ENCODE measurements at regions of chr1 and their contacts with region 1.

Region 1: DNA sequence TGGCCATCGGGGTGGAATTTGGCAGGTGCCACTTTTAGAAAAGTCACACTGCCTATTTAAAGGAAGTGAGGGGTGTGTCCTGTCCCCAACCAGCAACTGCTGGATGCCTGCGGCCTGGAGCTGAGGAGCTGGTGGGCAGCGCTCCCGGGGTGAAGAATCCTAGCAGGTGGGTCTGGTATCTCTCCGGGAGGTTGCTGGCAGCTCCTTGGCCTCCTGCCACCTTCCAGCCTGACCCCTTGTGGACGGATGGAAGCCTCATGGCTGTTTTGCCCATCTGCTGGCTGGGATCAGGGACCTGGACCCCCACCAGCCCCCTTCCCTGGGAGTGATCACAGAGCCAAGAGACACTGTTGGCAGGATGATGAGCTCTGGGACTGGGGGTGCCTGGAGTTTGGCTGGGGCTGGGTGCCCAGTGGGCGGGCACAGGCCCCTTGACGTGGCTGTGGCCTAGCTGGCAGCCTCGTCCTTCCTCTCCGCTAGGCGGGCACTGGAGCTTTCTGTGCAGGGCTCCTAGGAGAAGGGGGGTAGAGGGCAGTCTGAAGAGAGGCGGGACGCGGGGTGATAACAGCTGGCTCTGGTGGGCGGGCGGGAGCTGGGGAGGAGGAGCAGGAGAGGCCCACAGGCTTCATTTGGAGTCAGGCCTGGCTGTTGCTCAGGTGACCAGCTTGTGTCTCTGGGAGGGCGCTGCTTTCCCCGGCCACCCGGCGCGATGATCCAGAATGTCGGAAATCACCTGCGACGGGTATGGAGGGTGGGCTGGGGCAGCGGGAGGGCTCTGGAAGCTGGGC is at the start of gene ACOT11:
- DNase-seq: peak; percentile 89 to 96 (median 90)
- ATAC-seq: peak; percentile 89 to 92 (median 92)
- H3K4me3 ChIP-seq: peak within 1 kb of the TSS; percentile 19 to 72 (median 56)
- H3K27ac ChIP-seq: peak within 1 kb of the TSS; percentile 82 to 98 (median 90)
- H3K4me1 ChIP-seq: peaks cover 0 to 38% (median 12%) of the 10 kb centered on the region in 12 donors
- H3K27me3 ChIP-seq: no peaks in the 10 kb centered on the region
- CTCF ChIP-seq: peak; percentile 22 to 63 (median 44)
- POLR2A ChIP-seq: peak in 1 of 2 donors; percentile 60
- total RNA-seq, gene ACOT11: 33.2 to 69.3 (median 55.9) TPM

Region 2: DNA sequence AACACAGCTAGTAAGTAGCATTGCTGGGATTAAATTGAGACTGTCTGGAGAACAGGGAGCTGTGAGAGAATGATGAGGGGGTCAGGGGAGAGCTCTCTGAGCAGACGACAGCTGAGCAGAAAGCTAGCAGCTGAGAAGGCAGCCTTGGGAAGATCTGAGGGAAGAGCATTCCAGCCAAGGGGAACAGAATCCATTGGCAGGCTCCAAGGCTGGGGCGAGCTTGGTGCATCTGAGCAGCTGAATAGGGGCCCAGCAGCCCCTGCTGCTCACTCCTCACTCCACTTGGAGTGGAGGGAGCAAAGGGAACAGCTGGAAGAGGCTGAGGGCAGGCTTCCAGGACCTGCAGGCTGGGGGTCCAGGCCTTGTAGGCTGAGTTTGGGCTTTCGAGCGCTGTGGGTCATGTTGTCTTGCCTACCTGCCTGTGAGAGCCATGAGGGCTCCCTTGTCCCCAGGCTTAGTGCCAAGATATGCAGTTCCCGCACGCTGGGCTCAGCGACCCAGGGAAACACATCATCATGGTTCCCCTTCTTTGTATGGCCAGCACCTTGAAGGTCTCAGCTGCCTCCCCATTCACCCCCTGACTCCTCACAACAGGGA is 10.7 kb after region 1 on chr1:
- intact Hi-C with region 1: loop called in 1 of 10 experiments (anchors 1 kb)
- DNase-seq: peak in 1 of 5 donors; percentile 54
- ATAC-seq: peak; percentile 6 to 25 (median 10)
- H3K4me3 ChIP-seq: peak overlapping the region in 4 of 12 donors; percentile 2 to 26 (median 12)
- H3K27ac ChIP-seq: peak overlapping the region; percentile 19 to 91 (median 82)
- H3K4me1 ChIP-seq: peaks cover 0 to 40% (median 18%) of the 10 kb centered on the region in 12 donors
- H3K27me3 ChIP-seq: no peaks in the 10 kb centered on the region
- CTCF ChIP-seq: no peak
- POLR2A ChIP-seq: no peak

Region 3: DNA sequence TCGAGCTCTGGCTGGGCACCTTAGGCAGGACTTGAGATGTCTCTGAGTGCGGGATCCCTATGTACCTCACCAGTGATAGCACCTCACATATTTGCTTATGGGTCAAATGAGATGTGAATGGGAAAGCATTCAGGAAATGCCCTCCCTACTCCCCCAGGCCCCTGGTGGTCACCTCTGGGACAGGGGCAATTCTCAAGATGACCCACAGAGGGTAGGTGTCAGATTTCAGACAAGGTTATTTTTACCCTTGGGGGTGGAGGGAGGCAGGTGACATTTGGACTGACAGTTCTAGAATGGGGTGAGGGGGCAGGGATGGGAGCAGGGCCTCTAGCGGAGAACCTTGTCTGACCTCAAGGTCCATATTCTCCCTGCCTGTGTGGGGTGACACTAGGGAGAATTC is 27.4 kb after region 1 on chr1:
- intact Hi-C with region 1: loop called in 4 of 10 experiments (anchors 2 to 5 kb)
- DNase-seq: peak; percentile 15 to 82 (median 61)
- ATAC-seq: peak; percentile 69 to 80 (median 74)
- H3K4me3 ChIP-seq: no peak overlapping the region
- H3K27ac ChIP-seq: peak overlapping the region; percentile 66 to 97 (median 89)
- H3K4me1 ChIP-seq: peaks cover 1 to 81% (median 42%) of the 10 kb centered on the region in 12 donors
- H3K27me3 ChIP-seq: no peaks in the 10 kb centered on the region
- CTCF ChIP-seq: peak in 9 of 12 donors; percentile 10 to 43 (median 32)
- POLR2A ChIP-seq: no peak

Region 4: GRCh38 chr1:54581621-54582035 is 33.8 kb after region 1 on chr1:
- intact Hi-C with region 1: loop called in 6 of 10 experiments (anchors 2 to 5 kb)
- DNase-seq: peak; percentile 88 to 97 (median 91)
- ATAC-seq: peak; percentile 88 to 90 (median 88)
- H3K4me3 ChIP-seq: no peak overlapping the region
- H3K27ac ChIP-seq: peak overlapping the region; percentile 47 to 98 (median 89)
- H3K4me1 ChIP-seq: peaks cover under 1 to 92% (median 58%) of the 10 kb centered on the region in 12 donors
- H3K27me3 ChIP-seq: no peaks in the 10 kb centered on the region
- CTCF ChIP-seq: peak in 1 of 12 donors; percentile 9
- POLR2A ChIP-seq: no peak

Region 5: GRCh38 chr1:54623230-54624007 is 75.6 kb after region 1 on chr1 and contains the start of gene FAM151A:
- intact Hi-C with region 1: no loop called
- DNase-seq: peak in 3 of 5 donors; percentile 43 to 74 (median 52)
- ATAC-seq: peak; percentile 44 to 61 (median 56)
- H3K4me3 ChIP-seq: no peak within 1 kb of the TSS
- H3K27ac ChIP-seq: peak within 1 kb of the TSS in 4 of 12 donors; percentile 11 to 45 (median 36)
- H3K4me1 ChIP-seq: peaks cover 0 to 7% (median 1%) of the 10 kb centered on the region in 12 donors
- H3K27me3 ChIP-seq: peaks cover 0 to 7% (median 0%) of the 10 kb centered on the region in 9 donors
- CTCF ChIP-seq: no peak
- POLR2A ChIP-seq: no peak
- total RNA-seq, gene FAM151A: 0.19 to 1.9 (median 0.53) TPM

Region 6: DNA sequence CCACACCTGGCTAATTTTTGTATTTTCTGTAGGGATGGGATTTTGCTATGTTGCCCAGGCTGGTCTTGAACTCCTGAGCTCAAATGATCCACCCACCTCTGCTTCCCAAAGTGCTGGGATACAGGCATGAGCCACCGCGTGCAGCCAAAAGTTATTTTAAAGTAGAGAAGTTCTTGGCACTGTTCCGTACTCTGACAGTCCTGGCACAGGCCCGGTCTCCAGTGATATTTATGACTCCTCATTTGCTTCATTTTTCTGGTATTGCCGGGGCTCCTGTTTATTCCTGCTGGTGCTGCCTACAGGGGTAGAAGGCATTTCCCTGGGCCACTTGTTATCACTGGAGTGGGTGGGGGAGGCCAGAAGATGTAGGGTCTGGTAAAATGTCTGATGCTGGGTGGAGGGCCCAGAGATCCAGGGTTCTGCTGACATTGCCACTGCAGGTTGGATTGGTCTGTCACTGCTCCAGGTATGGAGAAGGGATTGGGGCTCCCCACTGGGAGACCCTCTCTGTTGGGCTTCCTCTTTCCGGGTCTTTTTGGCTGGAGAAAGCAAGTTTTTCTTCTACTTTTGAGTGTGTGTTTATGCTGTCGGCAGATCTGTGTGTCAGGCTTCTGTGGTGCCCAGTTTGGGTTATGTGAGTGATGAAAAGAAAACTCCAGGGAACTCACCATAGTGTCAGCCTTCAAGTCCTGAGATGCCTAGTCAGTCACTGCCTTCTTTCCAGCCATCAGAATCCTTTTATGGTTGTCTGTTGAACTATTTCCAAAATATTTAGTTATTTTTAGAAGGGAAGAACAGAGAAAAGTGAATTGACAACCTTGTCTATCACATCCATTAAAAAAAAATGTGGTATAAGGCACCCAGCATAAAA is 98.2 kb after region 1 on chr1:
- intact Hi-C with region 1: loop called in 2 of 10 experiments (anchors 5 kb)
- DNase-seq: peak in 4 of 5 donors; percentile 62 to 74 (median 65)
- ATAC-seq: peak; percentile 80 to 92 (median 87)
- H3K4me3 ChIP-seq: peak overlapping the region in 2 of 12 donors; percentile 6 to 15
- H3K27ac ChIP-seq: peak overlapping the region; percentile 35 to 96 (median 76)
- H3K4me1 ChIP-seq: peaks cover 0 to 12% (median 3%) of the 10 kb centered on the region in 12 donors
- H3K27me3 ChIP-seq: no peaks in the 10 kb centered on the region
- CTCF ChIP-seq: no peak
- POLR2A ChIP-seq: no peak